Endothelial cell of umbilical vein (primary cell): ENCODE measurements at regions of chr6 and their contacts with region 1.

Region 1: GRCh38 chr6:142871910-142872331 is 73.1 kb downstream of the HIVEP2 start:
- DNase-seq: peak; percentile 90
- H3K4me3 ChIP-seq: no peak overlapping the region
- H3K27ac ChIP-seq: peak overlapping the region; percentile 59
- H3K4me1 ChIP-seq: peaks cover 40% of the 10 kb centered on the region
- H3K27me3 ChIP-seq: no peaks in the 10 kb centered on the region
- CTCF ChIP-seq: no peak
- POLR2A ChIP-seq: no peak

Region 2: GRCh38 chr6:142444881-142445301 is 427.0 kb before region 1 on chr6:
- CTCF ChIA-PET with region 1: no interaction called
- POLR2A ChIA-PET with region 1: no interaction called
- dilution Hi-C with region 1: no loop called
- intact Hi-C with region 1: no loop called
- DNase-seq: no peak
- H3K4me3 ChIP-seq: no peak overlapping the region
- H3K27ac ChIP-seq: no peak overlapping the region
- H3K4me1 ChIP-seq: no peaks in the 10 kb centered on the region
- H3K27me3 ChIP-seq: no peaks in the 10 kb centered on the region
- CTCF ChIP-seq: no peak
- POLR2A ChIP-seq: no peak

Region 3: GRCh38 chr6:142746524-142746923 is 125.4 kb before region 1 on chr6:
- CTCF ChIA-PET with region 1: no interaction called
- POLR2A ChIA-PET with region 1: no interaction called
- dilution Hi-C with region 1: no loop called
- intact Hi-C with region 1: loop called (anchors 5 kb)
- DNase-seq: peak; percentile 55
- H3K4me3 ChIP-seq: no peak overlapping the region
- H3K27ac ChIP-seq: no peak overlapping the region
- H3K4me1 ChIP-seq: no peaks in the 10 kb centered on the region
- H3K27me3 ChIP-seq: no peaks in the 10 kb centered on the region
- CTCF ChIP-seq: peak; percentile 46 to 50
- POLR2A ChIP-seq: no peak

Region 4: GRCh38 chr6:142827369-142827768 is 44.6 kb before region 1 on chr6:
- CTCF ChIA-PET with region 1: no interaction called
- POLR2A ChIA-PET with region 1: interaction called, 3 read pairs
- dilution Hi-C with region 1: no loop called
- intact Hi-C with region 1: loop called (anchors 1 kb)
- DNase-seq: peak; percentile 98
- H3K4me3 ChIP-seq: no peak overlapping the region
- H3K27ac ChIP-seq: peak overlapping the region; percentile 59
- H3K4me1 ChIP-seq: peaks cover 15% of the 10 kb centered on the region
- H3K27me3 ChIP-seq: no peaks in the 10 kb centered on the region
- CTCF ChIP-seq: no peak
- POLR2A ChIP-seq: no peak